AG04450 (cell line): ENCODE measurements at regions of chr9 and their contacts with region 1.

Region 1: DNA sequence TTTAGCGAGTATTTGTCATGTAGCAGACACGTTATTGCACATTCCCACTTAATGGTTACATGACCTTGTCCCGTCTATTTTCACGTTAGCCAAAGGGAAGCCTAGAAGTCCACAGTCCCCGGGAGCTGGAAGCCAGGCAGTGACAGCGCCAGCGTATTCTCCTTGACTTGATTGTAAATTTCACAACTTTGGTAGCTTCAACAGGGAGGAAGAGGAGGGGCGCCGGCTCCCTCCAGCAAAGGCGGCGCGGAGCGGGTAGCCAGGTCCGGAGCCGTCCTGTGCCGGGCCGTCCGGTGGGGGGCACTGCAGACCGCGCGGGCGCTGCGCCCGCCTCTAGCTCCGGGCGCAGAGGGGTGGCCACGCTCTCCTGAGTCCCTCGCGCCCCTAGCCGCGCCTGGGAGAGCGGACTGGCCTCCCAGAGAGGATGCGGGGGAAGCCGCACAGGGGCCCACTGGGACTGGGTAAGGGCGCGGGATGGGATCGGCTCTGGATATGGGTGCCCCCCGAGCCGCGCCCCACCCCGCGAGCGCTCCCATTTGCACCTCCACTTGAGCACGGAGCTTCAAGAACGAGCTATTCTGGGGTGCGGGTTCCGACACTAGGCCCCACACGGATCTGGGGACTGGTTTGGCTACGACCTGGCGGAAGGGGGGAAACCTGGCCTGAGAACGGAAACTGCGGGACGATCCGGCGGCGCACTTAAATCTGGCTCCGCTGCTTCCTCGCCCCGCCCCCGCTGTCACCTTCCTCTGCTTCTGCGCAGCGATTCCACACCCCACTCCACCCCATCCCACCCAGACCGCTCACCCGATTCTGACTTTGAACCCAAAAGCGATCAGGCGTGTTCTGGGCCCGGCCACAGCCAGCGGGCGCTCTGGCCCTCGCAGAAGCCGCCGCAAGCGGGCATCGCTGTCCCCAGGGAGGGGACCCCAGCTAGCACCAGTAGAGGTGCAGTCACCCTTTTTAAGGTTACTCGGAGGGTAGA is 23.8 kb downstream of the KLF4 start:
- DNase-seq: no peak
- H3K4me3 ChIP-seq: peak overlapping the region; percentile 66
- H3K27ac ChIP-seq: no peak overlapping the region
- H3K27me3 ChIP-seq: peaks cover 7% of the 10 kb centered on the region
- CTCF ChIP-seq: peak; percentile 73

Region 2: GRCh38 chr9:107425101-107426045 is 40.4 kb before region 1 on chr9:
- CTCF ChIA-PET with region 1: interaction called, 11 read pairs
- POLR2A ChIA-PET with region 1: no interaction called
- DNase-seq: no peak
- H3K4me3 ChIP-seq: peak overlapping the region; percentile 36
- H3K27ac ChIP-seq: no peak overlapping the region
- H3K27me3 ChIP-seq: peaks cover 2% of the 10 kb centered on the region
- CTCF ChIP-seq: peak; percentile 86

Region 3: GRCh38 chr9:107455425-107456135 is 10.2 kb before region 1 on chr9:
- CTCF ChIA-PET with region 1: interaction called, 11 read pairs
- POLR2A ChIA-PET with region 1: no interaction called
- DNase-seq: no peak
- H3K4me3 ChIP-seq: no peak overlapping the region
- H3K27ac ChIP-seq: no peak overlapping the region
- H3K27me3 ChIP-seq: peaks cover 6% of the 10 kb centered on the region
- CTCF ChIP-seq: no peak

Region 4: DNA sequence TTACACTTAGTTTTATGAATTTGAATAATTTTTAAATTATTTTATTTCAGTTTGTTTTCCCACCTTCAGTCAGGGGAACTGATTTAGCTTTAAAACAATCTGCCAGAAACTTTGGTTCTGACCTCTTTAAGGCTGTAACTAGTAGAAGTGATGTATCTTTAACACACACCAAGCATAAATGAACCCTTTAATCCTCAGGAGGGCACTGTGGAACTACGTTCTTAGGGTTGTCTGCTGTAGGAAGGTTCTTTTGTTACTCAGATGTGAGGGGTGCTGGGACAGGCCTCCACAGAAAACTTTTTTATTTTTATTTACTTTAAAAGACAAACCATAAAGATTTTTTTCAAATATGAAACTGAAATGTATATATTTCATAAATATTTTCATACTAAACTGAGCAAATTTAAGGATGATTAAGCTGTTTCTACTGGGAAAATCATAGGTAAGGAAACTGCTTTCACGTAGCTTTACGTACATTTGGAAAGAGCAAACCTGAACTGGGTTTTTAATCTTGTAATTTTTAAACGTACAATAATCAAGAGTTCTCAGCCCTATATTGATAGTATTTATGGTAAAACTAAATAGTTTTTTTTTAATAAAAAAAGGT is 18.5 kb after region 1 on chr9:
- CTCF ChIA-PET with region 1: interaction called, 22 read pairs
- POLR2A ChIA-PET with region 1: no interaction called
- DNase-seq: peak; percentile 59
- H3K4me3 ChIP-seq: no peak overlapping the region
- H3K27ac ChIP-seq: no peak overlapping the region
- H3K27me3 ChIP-seq: peaks cover 11% of the 10 kb centered on the region
- CTCF ChIP-seq: peak; percentile 69

Region 5: DNA sequence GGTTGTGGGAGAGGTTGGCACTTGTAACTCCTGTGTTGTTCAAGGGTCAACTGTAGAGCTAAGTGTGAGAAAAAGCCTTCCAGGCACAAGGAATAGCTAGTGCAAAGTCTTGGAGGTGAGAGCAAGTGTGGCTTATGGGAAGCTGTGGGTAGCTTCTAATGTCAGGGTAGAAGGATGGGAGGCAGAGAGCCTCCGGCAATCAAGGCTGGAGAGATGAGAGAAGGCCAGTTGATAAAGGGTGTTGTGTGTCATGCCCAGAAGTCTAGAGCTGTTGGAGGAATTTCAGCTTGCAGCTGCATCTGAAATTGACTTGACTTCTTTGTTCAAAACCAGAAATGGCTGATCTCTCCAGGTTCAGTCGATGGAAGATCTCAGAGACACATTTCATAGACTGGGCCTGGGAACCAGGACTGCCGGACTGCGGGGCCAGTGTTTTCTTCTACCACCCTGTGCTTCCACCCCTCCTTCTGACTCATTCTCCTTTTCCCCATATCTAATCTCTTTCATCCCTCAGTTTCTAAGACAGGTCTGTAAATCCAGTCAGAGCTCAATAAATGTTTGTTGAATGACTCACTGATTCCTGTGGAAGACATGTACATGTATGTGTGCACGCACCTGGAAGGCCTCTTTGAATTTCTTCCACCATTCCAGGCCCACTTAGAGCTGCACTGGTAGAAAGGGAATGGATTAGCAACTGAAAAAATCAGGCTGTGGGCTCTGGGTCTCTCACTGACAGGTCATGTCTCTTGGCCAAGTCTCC is 91.7 kb after region 1 on chr9:
- CTCF ChIA-PET with region 1: no interaction called
- POLR2A ChIA-PET with region 1: no interaction called
- DNase-seq: no peak
- H3K4me3 ChIP-seq: no peak overlapping the region
- H3K27ac ChIP-seq: no peak overlapping the region
- H3K27me3 ChIP-seq: no peaks in the 10 kb centered on the region
- CTCF ChIP-seq: no peak

Region 6: GRCh38 chr9:108272349-108272899 is 806.7 kb after region 1 on chr9:
- CTCF ChIA-PET with region 1: interaction called, 10 read pairs
- POLR2A ChIA-PET with region 1: no interaction called
- DNase-seq: peak; percentile 7
- H3K4me3 ChIP-seq: peak overlapping the region; percentile 49
- H3K27ac ChIP-seq: peak overlapping the region; percentile 35
- H3K27me3 ChIP-seq: no peaks in the 10 kb centered on the region
- CTCF ChIP-seq: peak; percentile 60

Region 7: DNA sequence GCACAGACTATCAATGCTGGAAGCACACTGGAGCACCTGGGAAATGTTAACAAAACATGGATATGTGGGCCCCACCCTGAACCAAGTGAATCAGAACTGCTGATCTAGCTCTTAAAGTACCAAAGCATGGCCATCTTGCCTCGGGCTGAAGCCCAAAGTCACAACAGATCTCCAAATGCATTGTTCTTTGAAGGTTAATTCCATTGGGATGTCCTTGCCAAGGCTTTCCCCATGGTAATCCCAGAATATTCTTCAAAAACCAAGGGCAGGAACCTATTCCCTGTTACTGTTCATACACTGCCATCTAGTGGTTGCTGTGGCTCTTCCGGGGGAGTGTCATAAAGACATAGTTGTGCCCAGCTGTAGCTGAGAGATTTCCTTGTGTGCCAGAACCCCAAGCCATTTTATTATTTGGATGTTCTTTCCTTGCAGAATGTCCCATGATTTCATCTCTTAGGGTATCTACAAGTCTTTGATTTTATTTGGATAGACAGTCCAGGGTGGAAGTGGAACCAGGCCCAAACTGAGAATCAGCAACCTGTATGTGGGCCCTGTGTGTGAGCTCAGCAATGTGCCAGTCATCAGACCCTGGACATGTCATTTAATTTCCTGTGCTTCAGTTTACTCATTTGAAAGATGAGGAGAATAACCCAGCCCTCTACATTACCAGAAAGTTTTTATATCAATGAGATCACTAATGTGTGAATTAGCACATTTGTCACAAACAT is 1100.1 kb after region 1 on chr9:
- CTCF ChIA-PET with region 1: interaction called, 60 read pairs
- POLR2A ChIA-PET with region 1: no interaction called
- DNase-seq: peak; percentile 81
- H3K4me3 ChIP-seq: no peak overlapping the region
- H3K27ac ChIP-seq: no peak overlapping the region
- H3K27me3 ChIP-seq: no peaks in the 10 kb centered on the region
- CTCF ChIP-seq: peak; percentile 94

Region 8: GRCh38 chr9:108761655-108762347 is 1296.0 kb after region 1 on chr9:
- CTCF ChIA-PET with region 1: interaction called, 22 read pairs
- POLR2A ChIA-PET with region 1: no interaction called
- DNase-seq: peak; percentile 13
- H3K4me3 ChIP-seq: no peak overlapping the region
- H3K27ac ChIP-seq: no peak overlapping the region
- H3K27me3 ChIP-seq: peaks cover 4% of the 10 kb centered on the region
- CTCF ChIP-seq: peak; percentile 88